ENCODE measurements at regions of chr11 and their contacts with region 1.

Region 1: DNA sequence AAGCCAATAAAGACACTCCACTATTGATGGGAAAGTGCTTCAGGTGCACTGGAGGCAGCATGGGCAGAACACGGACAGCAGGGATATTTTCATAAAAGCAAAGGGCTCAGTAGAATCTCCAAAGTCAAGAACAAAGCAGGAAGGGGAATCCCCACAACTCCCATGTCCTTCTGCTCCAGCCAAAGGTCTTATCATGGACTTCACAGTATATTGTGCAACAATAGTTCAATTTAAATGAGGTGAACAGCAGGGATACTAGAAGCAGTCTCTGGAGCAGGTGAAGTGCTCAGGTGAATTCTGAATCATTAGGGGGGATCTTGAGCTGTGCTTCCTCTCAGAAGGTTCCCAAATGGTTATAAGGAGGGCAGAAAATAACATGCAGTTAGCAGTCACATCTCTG is 6.6 kb upstream of the OR2D2 start:
- DNase-seq: no peak
- H3K4me3 ChIP-seq: no peak overlapping the region
- H3K27ac ChIP-seq: no peak overlapping the region
- H3K4me1 ChIP-seq: no peaks in the 10 kb centered on the region
- H3K27me3 ChIP-seq: no peaks in the 10 kb centered on the region
- CTCF ChIP-seq: no peak

Region 2: GRCh38 chr11:6681949-6682348 is 217.0 kb before region 1 on chr11:
- intact Hi-C with region 1: no loop called
- DNase-seq: no peak
- H3K4me3 ChIP-seq: peak overlapping the region; percentile 76 to 93
- H3K27ac ChIP-seq: peak overlapping the region; percentile 89 to 94
- H3K4me1 ChIP-seq: peaks cover 0 to 24% (median 20%) of the 10 kb centered on the region in 4 donors
- H3K27me3 ChIP-seq: no peaks in the 10 kb centered on the region
- CTCF ChIP-seq: no peak

Region 3: DNA sequence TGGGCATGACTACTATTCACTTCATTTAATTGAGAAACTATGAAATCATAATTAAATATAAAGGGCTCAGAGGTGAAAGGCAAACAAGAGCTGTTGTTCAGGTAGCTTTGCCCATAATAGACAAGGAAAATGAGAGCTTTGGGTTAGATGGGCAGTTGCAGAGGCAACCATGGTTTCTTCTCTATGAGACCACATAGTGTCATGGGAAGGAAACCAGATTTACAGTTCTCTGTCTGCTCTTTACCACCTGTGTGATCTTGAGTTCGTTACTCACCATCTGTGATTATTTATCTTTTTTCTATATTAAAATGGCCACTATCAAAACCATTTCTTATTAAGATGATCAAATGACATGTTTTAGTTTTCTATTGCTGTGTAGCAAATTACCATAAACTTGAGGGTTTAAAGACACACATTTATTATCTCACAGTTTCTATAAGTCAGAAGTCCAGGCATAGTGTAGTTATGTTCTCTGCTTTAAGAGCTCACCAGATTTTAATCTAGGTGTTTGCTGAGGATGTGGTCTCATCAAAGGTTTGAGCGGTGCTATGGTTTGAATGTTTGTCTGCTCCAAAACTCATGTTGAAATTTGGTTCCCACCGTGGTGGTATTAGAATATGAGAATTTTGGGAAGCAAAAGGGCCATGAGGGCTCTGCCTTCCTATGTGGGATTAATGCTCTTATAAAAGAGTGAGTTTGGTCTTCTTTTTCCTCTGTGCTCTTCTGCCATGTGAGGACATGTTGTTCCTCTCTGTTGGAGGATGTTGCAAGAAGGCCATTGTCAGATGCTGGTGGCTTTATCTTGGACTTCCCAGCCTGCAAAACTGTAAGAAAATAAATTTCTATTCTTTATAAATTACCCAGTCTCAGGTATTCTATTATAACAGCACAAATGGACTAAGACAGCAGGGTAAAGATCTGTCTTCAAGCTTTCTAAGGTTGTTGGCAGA is 165.3 kb before region 1 on chr11:
- intact Hi-C with region 1: no loop called
- DNase-seq: no peak
- H3K4me3 ChIP-seq: no peak overlapping the region
- H3K27ac ChIP-seq: no peak overlapping the region
- H3K4me1 ChIP-seq: no peaks in the 10 kb centered on the region
- H3K27me3 ChIP-seq: no peaks in the 10 kb centered on the region
- CTCF ChIP-seq: no peak

Region 4: GRCh38 chr11:6931146-6931713 is 32.3 kb after region 1 on chr11:
- intact Hi-C with region 1: loop called (anchors 2 kb)
- DNase-seq: no peak
- H3K4me3 ChIP-seq: no peak overlapping the region
- H3K27ac ChIP-seq: no peak overlapping the region
- H3K4me1 ChIP-seq: peaks cover 0 to 11% (median 5%) of the 10 kb centered on the region in 4 donors
- H3K27me3 ChIP-seq: no peaks in the 10 kb centered on the region
- CTCF ChIP-seq: no peak

Measured in tibial artery (tissue), 4 donors.